Heart right ventricle (tissue), 16 donors: ENCODE measurements at regions of chr7 and their contacts with region 1.

Region 1: DNA sequence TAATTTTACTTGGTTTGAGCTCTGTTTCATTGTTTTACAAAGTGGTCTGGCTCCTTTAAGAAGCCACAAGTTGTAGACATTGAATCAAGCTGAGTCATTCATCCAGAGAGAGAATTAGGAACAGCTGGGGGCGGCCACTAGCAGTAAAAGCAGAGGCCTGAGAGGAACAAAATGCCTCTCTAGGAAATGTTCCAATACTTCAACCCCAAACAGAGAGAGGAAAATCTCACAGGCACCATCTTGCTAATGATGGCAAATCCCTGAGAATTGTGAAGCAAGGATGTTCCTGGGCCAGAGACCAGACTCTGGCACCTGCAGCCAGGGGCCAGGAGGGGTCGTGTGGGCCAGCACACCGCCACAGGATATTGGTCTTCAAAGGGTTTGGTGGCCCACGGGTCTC is 26.5 kb upstream of the TRIL start:
- DNase-seq: peak in 1 of 2 donors; percentile 40
- ATAC-seq: peak in 7 of 8 donors; percentile 36 to 59 (median 52)
- H3K4me3 ChIP-seq: no peak overlapping the region
- H3K27ac ChIP-seq: peak overlapping the region in 7 of 10 donors; percentile 14 to 77 (median 49)
- H3K4me1 ChIP-seq: peaks cover 0 to 60% (median 44%) of the 10 kb centered on the region in 9 donors
- H3K27me3 ChIP-seq: no peaks in the 10 kb centered on the region
- CTCF ChIP-seq: peak in 1 of 9 donors; percentile 6

Region 2: DNA sequence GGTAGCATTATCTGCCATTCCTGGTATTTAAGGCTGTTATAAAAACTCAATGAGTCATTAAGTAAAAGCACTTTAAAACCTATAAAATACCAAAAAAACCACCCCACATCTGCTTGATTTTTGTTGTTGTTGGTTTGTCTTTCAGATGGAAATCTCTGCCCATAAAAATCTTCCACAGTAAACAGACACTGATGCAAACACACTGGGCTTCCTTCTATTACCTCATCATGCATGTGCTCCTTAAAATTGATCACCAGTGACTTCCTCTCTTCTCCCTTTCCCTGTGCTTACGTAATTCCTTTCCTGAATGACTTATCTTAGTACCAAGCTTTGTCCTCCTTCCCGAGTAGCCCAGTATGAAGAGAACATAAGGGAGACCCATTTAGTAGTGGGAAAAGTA is 1574.9 kb before region 1 on chr7:
- intact Hi-C with region 1: loop called in 1 of 10 experiments (anchors 5 kb)
- DNase-seq: no peak
- ATAC-seq: no peak
- H3K4me3 ChIP-seq: no peak overlapping the region
- H3K27ac ChIP-seq: no peak overlapping the region
- H3K4me1 ChIP-seq: no peaks in the 10 kb centered on the region
- H3K27me3 ChIP-seq: peaks cover 0 to 15% (median 0%) of the 10 kb centered on the region in 7 donors
- CTCF ChIP-seq: no peak

Region 3: DNA sequence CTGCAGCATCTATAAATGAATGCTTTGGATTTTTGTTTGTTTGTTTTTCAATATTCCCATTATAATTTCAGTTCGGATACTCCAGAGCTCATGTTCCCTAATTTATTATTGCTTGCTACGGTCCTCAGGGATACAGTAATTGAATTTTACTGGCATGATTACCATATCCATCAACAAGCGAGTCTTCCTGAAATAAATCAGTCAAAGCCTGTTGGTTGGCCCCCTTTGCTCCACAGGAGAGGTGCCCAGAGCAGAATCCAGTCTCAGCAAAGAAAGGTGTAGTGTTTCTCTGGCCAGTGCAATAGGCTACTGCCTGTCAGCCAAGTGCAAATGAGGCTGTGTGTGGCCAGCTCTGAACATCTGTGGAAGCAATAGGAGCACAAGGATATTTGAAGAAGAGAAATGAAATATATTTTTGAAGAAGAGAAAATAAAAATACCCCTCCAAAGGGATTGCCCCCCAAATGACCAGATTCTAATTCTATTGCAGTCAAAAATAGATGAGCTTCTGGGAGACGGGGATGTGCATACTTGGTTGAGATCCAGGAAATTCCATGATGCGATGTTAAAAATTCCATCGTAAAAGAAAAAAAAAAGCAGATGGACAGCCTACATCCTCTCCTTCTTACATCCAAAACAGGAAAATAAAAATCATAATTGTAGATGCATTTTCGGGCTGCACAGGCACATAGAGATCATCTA is 44.6 kb before region 1 on chr7:
- intact Hi-C with region 1: loop called in 1 of 10 experiments (anchors 5 kb)
- DNase-seq: no peak
- ATAC-seq: peak in 3 of 8 donors; percentile 29 to 50 (median 43)
- H3K4me3 ChIP-seq: no peak overlapping the region
- H3K27ac ChIP-seq: peak overlapping the region in 3 of 10 donors; percentile 21 to 53 (median 50)
- H3K4me1 ChIP-seq: peaks cover 0 to 40% (median 10%) of the 10 kb centered on the region in 9 donors
- H3K27me3 ChIP-seq: peaks cover 0 to 4% (median 0%) of the 10 kb centered on the region in 7 donors
- CTCF ChIP-seq: no peak

Region 4: GRCh38 chr7:29035044-29035740 is 50.6 kb after region 1 on chr7:
- intact Hi-C with region 1: loop called in 1 of 10 experiments (anchors 5 kb)
- DNase-seq: no peak
- ATAC-seq: peak in 7 of 8 donors; percentile 25 to 91 (median 67)
- H3K4me3 ChIP-seq: no peak overlapping the region
- H3K27ac ChIP-seq: peak overlapping the region in 1 of 10 donors; percentile 12
- H3K4me1 ChIP-seq: peaks cover 0 to 42% (median 24%) of the 10 kb centered on the region in 9 donors
- H3K27me3 ChIP-seq: no peaks in the 10 kb centered on the region
- CTCF ChIP-seq: no peak